Sciatic nerve (tissue), 2 donors: ENCODE measurements at regions of chr6 and their contacts with region 1.

Region 1: GRCh38 chr6:142523515-142524375 is 221.9 kb downstream of the ADGRG6 start:
- DNase-seq: no peak
- ATAC-seq: no peak

Region 2: GRCh38 chr6:140766999-140767398 is 1756.7 kb before region 1 on chr6:
- intact Hi-C with region 1: loop called (anchors 5 kb)
- DNase-seq: no peak
- ATAC-seq: no peak